Activated naive CD4-positive, alpha-beta T cell treated with anti-CD3 and anti-CD28 coated beads for 36 hours (primary cell): ENCODE measurements at regions of chr20 and their contacts with region 1.

Region 1: DNA sequence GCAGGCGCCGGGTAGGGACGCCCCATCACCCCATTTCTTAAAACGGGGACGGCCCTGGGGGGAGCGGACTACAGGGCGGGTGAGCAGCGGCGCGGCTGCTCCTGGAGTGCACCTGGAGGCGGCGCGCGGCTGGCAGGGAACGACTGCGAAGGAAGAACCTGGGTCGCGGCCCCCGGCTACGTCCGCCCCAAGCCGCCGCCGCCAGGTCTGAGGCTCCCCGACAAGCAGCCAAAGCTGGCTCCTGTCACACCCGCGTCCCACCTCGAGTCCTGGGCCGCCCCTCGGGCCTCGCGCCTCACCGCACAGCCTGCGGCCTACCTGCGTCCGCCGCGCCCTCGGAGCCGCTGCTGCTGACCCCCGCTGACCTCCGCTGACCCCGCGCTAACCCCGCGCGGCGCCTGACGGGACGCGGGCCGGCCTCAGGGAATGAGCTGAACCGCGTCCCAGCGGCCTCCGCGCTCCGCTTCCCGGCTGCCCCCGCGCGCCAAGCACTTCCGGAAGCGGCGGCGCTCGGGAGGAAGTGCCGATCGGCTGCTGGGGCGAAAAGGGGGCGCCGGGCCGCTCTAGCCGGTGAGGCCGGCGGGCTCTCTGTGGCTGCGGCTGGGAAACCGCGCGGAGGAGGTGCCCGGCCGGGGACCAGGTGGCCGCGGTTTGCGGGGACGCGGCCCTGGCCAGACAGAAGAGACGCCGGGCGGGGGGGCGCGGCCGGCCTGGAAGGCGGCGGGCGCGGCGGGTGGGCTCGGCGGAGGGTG is at the starts of genes ARFRP1 and ZGPAT:
- DNase-seq: peak; percentile 90
- H3K4me3 Mint-ChIP-seq: peak within 1 kb of the TSS; percentile 80
- H3K27ac Mint-ChIP-seq: peak within 1 kb of the TSS; percentile 86
- H3K4me1 Mint-ChIP-seq: peaks cover 46% of the 10 kb centered on the region
- H3K27me3 Mint-ChIP-seq: no peaks in the 10 kb centered on the region
- total RNA-seq, gene ARFRP1: 45.6 to 49.2 TPM
- total RNA-seq, gene ZGPAT: 15.3 to 18.0 TPM

Region 2: GRCh38 chr20:63627129-63627750 is 80.5 kb before region 1 on chr20:
- CTCF ChIA-PET with region 1: no interaction called
- intact Hi-C with region 1: loop called (anchors 2 kb)
- DNase-seq: peak; percentile 94
- H3K4me3 Mint-ChIP-seq: peak overlapping the region; percentile 99
- H3K27ac Mint-ChIP-seq: peak overlapping the region; percentile 74
- H3K4me1 Mint-ChIP-seq: peaks cover 52% of the 10 kb centered on the region
- H3K27me3 Mint-ChIP-seq: no peaks in the 10 kb centered on the region

Region 3: GRCh38 chr20:63739130-63740069 is 31.7 kb after region 1 on chr20 and contains the start of gene SLC2A4RG:
- CTCF ChIA-PET with region 1: interaction called, 15 read pairs
- intact Hi-C with region 1: loop called (anchors 2 kb)
- DNase-seq: peak; percentile 58
- H3K4me3 Mint-ChIP-seq: peak within 1 kb of the TSS; percentile 50
- H3K27ac Mint-ChIP-seq: no peak within 1 kb of the TSS
- H3K4me1 Mint-ChIP-seq: peaks cover 22% of the 10 kb centered on the region
- H3K27me3 Mint-ChIP-seq: no peaks in the 10 kb centered on the region
- total RNA-seq, gene SLC2A4RG: 22.4 to 24.8 TPM

Region 4: DNA sequence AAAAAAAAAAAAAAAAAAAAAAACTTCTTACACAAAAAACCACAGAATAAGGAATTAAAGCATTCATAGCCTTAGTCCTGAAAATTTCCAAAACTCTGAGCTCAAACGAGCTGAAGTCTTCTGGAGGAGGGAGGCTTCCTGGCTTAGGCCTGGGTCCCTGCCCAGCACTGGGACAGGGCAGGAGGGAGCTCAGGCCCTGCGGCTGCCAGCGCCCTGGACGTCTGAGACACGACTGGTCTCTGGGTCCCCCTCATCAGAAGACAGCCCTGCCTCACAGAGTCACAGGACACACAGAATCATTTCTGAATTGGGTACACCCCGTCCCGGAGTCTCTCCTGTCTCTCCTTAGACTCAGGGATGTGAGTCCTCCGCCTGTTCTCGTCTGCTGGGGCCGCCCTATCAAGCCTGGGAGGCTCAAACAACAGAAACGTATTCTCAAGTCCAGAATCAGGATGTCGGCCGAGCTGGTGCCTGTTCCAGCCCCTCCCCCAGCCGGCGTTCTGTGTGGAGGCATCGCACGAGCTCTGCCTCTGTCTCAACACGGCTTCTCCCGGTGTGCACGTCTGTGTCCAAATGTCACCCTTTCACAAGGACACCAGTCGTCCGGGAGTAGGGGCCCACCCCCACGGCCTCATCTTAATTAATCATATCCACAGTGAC is 83.9 kb after region 1 on chr20:
- CTCF ChIA-PET with region 1: interaction called, 6 read pairs
- intact Hi-C with region 1: loop called (anchors 1 kb)
- DNase-seq: no peak
- H3K4me3 Mint-ChIP-seq: no peak overlapping the region
- H3K27ac Mint-ChIP-seq: no peak overlapping the region
- H3K4me1 Mint-ChIP-seq: peaks cover 5% of the 10 kb centered on the region
- H3K27me3 Mint-ChIP-seq: peaks cover 5% of the 10 kb centered on the region

Region 5: GRCh38 chr20:63973636-63974402 is 266.1 kb after region 1 on chr20:
- CTCF ChIA-PET with region 1: no interaction called
- intact Hi-C with region 1: loop called (anchors 1 kb)
- DNase-seq: peak; percentile 79
- H3K4me3 Mint-ChIP-seq: no peak overlapping the region
- H3K27ac Mint-ChIP-seq: peak overlapping the region; percentile 15
- H3K4me1 Mint-ChIP-seq: peaks cover 41% of the 10 kb centered on the region
- H3K27me3 Mint-ChIP-seq: no peaks in the 10 kb centered on the region